ENCODE measurements at regions of chr1 and their contacts with region 1.

Region 1: GRCh38 chr1:64823691-64824476 is 79.0 kb downstream of the RAVER2 start:
- DNase-seq: peak; percentile 64
- H3K4me3 Mint-ChIP-seq: no peak overlapping the region
- H3K27ac Mint-ChIP-seq: no peak overlapping the region
- H3K4me1 Mint-ChIP-seq: peaks cover 29% of the 10 kb centered on the region
- H3K27me3 Mint-ChIP-seq: no peaks in the 10 kb centered on the region

Region 2: GRCh38 chr1:64469977-64470664 is 353.8 kb before region 1 on chr1 and contains the start of gene CACHD1:
- CTCF ChIA-PET with region 1: no interaction called
- POLR2A ChIA-PET with region 1: no interaction called
- intact Hi-C with region 1: loop called (anchors 5 kb)
- DNase-seq: peak; percentile 77
- H3K4me3 Mint-ChIP-seq: peak within 1 kb of the TSS; percentile 68
- H3K27ac Mint-ChIP-seq: no peak within 1 kb of the TSS
- H3K4me1 Mint-ChIP-seq: peaks cover 12% of the 10 kb centered on the region
- H3K27me3 Mint-ChIP-seq: peaks cover 52% of the 10 kb centered on the region
- total RNA-seq, gene CACHD1: 0.27 to 0.33 TPM

Region 3: DNA sequence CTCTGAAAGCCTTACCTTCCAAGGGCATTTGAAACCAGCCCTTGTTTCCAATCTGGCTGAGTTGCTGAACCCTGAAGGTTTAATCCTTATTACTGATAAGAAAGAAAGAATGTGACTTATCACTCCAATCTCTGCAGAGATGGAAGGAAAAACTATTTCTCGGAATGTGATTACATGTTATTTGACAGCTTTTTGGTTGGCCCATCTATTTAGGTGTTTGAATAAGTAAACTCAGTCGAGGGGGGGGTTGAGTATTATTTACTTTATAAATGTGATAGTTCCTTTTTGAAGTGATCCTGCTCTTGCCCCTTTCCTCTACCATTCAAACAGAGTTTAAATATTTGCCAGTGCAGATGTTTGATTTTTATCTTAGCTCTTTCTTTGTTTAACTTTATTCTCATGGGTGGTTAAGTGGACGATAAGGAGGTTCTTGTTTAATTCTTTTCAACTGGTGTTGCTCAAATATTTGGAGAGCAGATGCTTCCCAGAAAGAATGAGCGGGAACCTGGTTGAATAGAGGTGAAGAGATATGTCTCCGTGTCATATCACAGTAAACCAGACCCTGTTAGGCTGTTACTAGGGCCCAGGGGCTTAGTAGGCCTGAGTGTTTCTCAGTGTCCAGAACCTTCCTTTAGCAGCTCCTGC is 227.9 kb before region 1 on chr1:
- CTCF ChIA-PET with region 1: no interaction called
- POLR2A ChIA-PET with region 1: no interaction called
- intact Hi-C with region 1: no loop called
- DNase-seq: no peak
- H3K4me3 Mint-ChIP-seq: no peak overlapping the region
- H3K27ac Mint-ChIP-seq: no peak overlapping the region
- H3K4me1 Mint-ChIP-seq: no peaks in the 10 kb centered on the region
- H3K27me3 Mint-ChIP-seq: no peaks in the 10 kb centered on the region

Region 4: GRCh38 chr1:64744492-64745180 is 79.2 kb before region 1 on chr1 and contains the start of gene RAVER2:
- CTCF ChIA-PET with region 1: interaction called, 8 read pairs
- POLR2A ChIA-PET with region 1: no interaction called
- intact Hi-C with region 1: loop called (anchors 1 kb)
- DNase-seq: peak; percentile 72
- H3K4me3 Mint-ChIP-seq: peak within 1 kb of the TSS; percentile 77
- H3K27ac Mint-ChIP-seq: no peak within 1 kb of the TSS
- H3K4me1 Mint-ChIP-seq: peaks cover 5% of the 10 kb centered on the region
- H3K27me3 Mint-ChIP-seq: peaks cover 3% of the 10 kb centered on the region
- total RNA-seq, gene RAVER2: 2.9 to 3.2 TPM

Region 5: GRCh38 chr1:64966158-64966971 is 142.5 kb after region 1 on chr1 and contains the start of gene JAK1:
- CTCF ChIA-PET with region 1: no interaction called
- POLR2A ChIA-PET with region 1: interaction called, 5 read pairs
- intact Hi-C with region 1: loop called (anchors 2 kb)
- DNase-seq: peak; percentile 89
- H3K4me3 Mint-ChIP-seq: peak within 1 kb of the TSS; percentile 91
- H3K27ac Mint-ChIP-seq: peak within 1 kb of the TSS; percentile 72
- H3K4me1 Mint-ChIP-seq: peaks cover 48% of the 10 kb centered on the region
- H3K27me3 Mint-ChIP-seq: no peaks in the 10 kb centered on the region
- total RNA-seq, gene JAK1: 115 to 128 TPM

Region 6: GRCh38 chr1:65036545-65037180 is 212.8 kb after region 1 on chr1:
- CTCF ChIA-PET with region 1: no interaction called
- POLR2A ChIA-PET with region 1: no interaction called
- intact Hi-C with region 1: loop called (anchors 2 kb)
- DNase-seq: no peak
- H3K4me3 Mint-ChIP-seq: no peak overlapping the region
- H3K27ac Mint-ChIP-seq: no peak overlapping the region
- H3K4me1 Mint-ChIP-seq: peaks cover 12% of the 10 kb centered on the region
- H3K27me3 Mint-ChIP-seq: no peaks in the 10 kb centered on the region

Measured in activated CD4-positive, alpha-beta memory T cell treated with anti-CD3 and anti-CD28 coated beads for 36 hours (primary cell).